Vagina (tissue), 2 donors: ENCODE measurements at regions of chr12 and their contacts with region 1.

Region 1: GRCh38 chr12:80186727-80187217 is 87.4 kb downstream of the OTOGL start:
- DNase-seq: no peak
- H3K4me3 ChIP-seq: no peak overlapping the region
- H3K27ac ChIP-seq: peak overlapping the region; percentile 83
- H3K4me1 ChIP-seq: peaks cover 9% of the 10 kb centered on the region
- H3K27me3 ChIP-seq: no peaks in the 10 kb centered on the region
- CTCF ChIP-seq: peak; percentile 64 to 71 (median 65)
- POLR2A ChIP-seq: no peak

Region 2: GRCh38 chr12:79886917-79887519 is 299.8 kb before region 1 on chr12:
- intact Hi-C with region 1: loop called (anchors 10 kb)
- DNase-seq: no peak
- H3K4me3 ChIP-seq: no peak overlapping the region
- H3K27ac ChIP-seq: no peak overlapping the region
- H3K4me1 ChIP-seq: peaks cover 71% of the 10 kb centered on the region
- H3K27me3 ChIP-seq: no peaks in the 10 kb centered on the region
- CTCF ChIP-seq: peak; percentile 10 to 36 (median 29)
- POLR2A ChIP-seq: no peak

Region 3: GRCh38 chr12:80121661-80122060 is 65.1 kb before region 1 on chr12:
- intact Hi-C with region 1: no loop called
- DNase-seq: no peak
- H3K4me3 ChIP-seq: no peak overlapping the region
- H3K27ac ChIP-seq: no peak overlapping the region
- H3K4me1 ChIP-seq: peaks cover 16% of the 10 kb centered on the region
- H3K27me3 ChIP-seq: no peaks in the 10 kb centered on the region
- CTCF ChIP-seq: no peak
- POLR2A ChIP-seq: no peak

Region 4: GRCh38 chr12:80293759-80294158 is 107.0 kb after region 1 on chr12:
- intact Hi-C with region 1: no loop called
- DNase-seq: no peak
- H3K4me3 ChIP-seq: no peak overlapping the region
- H3K27ac ChIP-seq: no peak overlapping the region
- H3K4me1 ChIP-seq: no peaks in the 10 kb centered on the region
- H3K27me3 ChIP-seq: no peaks in the 10 kb centered on the region
- CTCF ChIP-seq: no peak
- POLR2A ChIP-seq: no peak

Region 5: DNA sequence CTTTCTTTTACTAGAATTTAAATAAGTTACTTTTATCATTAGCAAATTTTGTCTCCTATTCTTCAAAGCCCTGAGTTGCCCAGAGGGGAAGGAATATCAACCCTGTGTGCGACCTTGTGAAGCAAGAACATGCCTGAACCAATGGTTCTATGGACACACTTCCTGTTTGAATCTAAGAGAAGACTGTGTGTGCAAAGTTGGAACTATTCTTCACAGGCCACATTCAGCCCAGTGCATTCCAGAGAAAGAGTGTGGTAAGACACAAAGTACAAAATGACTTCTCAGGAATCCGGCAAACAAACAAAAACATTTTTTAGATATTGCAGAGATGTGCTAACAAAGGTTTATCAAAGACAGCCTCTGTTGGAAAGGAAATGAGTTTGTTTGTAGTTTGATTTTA is 166.5 kb after region 1 on chr12:
- intact Hi-C with region 1: no loop called
- DNase-seq: no peak
- H3K4me3 ChIP-seq: no peak overlapping the region
- H3K27ac ChIP-seq: no peak overlapping the region
- H3K4me1 ChIP-seq: no peaks in the 10 kb centered on the region
- H3K27me3 ChIP-seq: no peaks in the 10 kb centered on the region
- CTCF ChIP-seq: no peak
- POLR2A ChIP-seq: no peak